Activated naive CD4-positive, alpha-beta T cell treated with anti-CD3 and anti-CD28 coated beads for 36 hours (primary cell): ENCODE measurements at regions of chr17 and their contacts with region 1.

Region 1: DNA sequence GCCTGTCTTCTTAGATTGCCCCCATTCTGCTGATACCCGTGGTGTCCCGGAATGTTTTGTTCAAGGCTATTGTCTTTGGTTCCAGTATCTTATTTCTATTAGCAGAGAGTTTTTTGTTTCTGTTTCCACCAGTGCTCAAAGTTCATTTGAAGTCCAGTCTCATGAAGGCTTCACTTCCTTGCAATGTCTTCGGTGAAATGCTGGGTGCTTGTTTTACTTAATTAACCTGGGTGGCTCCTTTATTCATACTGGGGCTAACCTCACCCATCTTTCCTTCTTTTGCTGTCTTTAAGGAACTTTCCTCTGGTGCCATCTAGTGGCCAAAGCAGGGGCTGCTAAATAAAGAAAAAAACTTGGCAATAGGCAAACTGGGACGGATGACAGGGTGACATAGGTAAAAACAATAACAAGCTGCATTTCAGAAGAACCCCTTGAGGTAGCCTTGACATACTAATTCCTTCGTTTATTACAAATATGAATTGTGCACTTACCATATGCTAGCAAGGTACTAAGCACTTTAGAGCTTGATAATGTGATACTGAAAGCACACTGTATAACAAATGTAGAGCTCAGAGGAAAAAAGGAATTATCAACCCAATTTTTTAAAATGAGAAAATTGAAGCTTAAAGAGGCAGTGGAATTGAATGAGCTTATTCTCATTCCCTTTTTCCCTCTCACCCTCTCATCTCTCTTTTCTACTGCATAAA is 2.8 kb upstream of the SMIM36 start:
- DNase-seq: peak; percentile 85
- H3K4me3 Mint-ChIP-seq: no peak overlapping the region
- H3K27ac Mint-ChIP-seq: no peak overlapping the region
- H3K4me1 Mint-ChIP-seq: no peaks in the 10 kb centered on the region
- H3K27me3 Mint-ChIP-seq: no peaks in the 10 kb centered on the region

Region 2: DNA sequence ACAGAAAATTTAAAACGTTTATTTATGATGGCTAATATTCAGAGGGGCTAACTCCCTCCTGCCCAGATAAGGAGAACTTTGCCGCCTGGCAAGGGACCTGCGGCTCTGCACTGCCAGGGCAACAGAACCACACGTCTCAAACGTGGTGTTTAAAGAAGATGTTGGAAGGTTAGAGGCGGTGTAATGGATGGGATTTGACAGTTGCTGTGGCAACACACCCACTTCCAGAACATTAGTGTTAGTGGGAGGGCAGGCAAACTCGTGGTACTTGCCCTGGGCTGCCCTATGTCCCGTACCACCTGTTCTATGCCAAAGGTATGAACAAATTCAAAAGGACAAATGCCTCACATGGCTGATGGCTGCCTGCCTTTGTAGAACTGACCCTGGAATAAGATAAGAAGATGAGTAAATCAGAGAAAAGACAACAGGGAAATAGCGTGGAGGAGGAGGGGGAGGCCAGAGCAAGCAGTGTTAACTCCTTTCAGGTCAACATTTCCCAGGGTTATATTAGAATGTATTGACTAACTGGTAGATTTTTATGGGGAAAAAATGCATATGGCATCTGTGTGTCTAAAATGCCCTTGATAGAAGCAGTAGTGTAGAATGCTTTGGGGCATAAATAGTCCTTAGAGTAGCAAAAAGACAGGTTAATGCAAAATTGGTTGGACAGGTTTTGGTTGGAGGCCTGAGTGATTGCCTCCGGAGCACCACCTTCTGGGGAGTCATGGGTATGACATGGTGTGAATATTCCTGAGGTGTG is 218.4 kb before region 1 on chr17:
- CTCF ChIA-PET with region 1: no interaction called
- intact Hi-C with region 1: loop called (anchors 1 kb)
- DNase-seq: peak; percentile 72
- H3K4me3 Mint-ChIP-seq: no peak overlapping the region
- H3K27ac Mint-ChIP-seq: no peak overlapping the region
- H3K4me1 Mint-ChIP-seq: no peaks in the 10 kb centered on the region
- H3K27me3 Mint-ChIP-seq: peaks cover 6% of the 10 kb centered on the region

Region 3: DNA sequence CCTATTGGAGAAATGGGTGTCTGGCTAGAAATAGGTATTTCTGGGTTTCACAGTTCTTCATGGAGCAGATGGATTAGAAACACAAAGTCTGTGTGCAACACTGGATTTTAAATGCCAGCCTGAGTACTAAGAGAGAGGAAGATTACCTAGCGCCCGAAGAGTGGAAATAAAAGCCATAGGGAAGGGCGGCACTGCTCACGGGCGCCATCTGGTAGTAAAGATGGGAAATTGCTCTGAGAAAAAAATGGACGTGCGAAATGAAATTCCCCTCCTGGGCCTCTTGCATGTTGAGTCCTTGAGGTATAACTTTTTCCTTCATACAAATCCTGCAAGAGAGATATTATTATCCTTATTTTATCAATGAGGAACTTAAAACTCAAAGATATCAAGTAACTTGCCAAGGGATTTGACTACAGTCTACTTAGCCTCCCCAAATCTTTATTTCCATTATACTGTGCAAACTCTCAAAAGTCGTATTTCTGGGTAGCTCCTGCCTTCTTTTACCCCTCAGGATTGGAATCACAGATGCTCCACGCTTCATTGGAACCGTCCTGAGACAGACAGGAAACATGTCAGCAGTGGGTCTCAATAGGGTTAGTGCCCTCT is 165.2 kb before region 1 on chr17:
- CTCF ChIA-PET with region 1: interaction called, 29 read pairs
- intact Hi-C with region 1: loop called (anchors 2 kb)
- DNase-seq: peak; percentile 54
- H3K4me3 Mint-ChIP-seq: no peak overlapping the region
- H3K27ac Mint-ChIP-seq: no peak overlapping the region
- H3K4me1 Mint-ChIP-seq: peaks cover 4% of the 10 kb centered on the region
- H3K27me3 Mint-ChIP-seq: peaks cover 2% of the 10 kb centered on the region

Region 4: DNA sequence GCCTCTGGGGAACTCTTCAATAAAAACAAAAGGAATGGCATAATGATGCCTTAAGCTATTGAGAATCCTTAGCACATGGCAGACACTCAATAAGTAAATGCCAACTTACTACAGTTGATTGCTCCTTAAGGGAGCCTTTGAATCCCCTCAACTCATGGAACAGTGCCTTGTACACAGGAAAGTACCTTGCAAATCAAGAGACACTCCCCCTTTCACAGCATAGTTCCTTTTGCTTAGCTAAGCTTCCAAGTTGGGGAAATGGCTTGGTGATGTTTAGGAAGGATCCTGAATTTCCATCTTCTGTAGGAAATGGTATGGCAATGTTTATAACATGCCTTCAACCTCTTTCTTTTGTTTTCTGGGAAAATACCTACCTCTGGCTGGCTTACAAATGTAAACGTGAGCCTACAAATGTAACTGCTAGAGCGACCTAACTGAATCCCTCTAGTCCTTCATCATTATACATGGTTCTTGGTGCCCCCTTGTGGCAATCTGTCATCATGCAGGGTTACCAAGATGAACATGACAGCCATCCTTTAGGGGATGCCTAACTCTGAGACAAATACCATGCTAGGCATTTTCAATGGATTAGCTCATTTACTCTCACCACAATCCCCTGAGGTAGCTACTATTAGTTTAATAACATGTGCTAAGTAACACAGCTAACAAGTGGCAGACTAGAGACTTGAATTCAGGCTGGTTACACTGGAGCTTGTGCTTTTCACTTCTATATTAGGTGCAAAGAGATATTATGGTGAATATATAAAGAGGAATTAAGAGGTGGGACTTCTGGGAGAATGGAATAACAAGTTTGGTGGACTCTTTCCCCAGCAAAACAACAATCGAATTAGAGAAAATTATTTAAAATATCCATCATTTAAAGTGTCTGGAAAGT is 157.4 kb before region 1 on chr17:
- CTCF ChIA-PET with region 1: interaction called, 29 read pairs
- intact Hi-C with region 1: loop called (anchors 1 kb)
- DNase-seq: peak; percentile 88
- H3K4me3 Mint-ChIP-seq: no peak overlapping the region
- H3K27ac Mint-ChIP-seq: no peak overlapping the region
- H3K4me1 Mint-ChIP-seq: no peaks in the 10 kb centered on the region
- H3K27me3 Mint-ChIP-seq: peaks cover 9% of the 10 kb centered on the region

Region 5: DNA sequence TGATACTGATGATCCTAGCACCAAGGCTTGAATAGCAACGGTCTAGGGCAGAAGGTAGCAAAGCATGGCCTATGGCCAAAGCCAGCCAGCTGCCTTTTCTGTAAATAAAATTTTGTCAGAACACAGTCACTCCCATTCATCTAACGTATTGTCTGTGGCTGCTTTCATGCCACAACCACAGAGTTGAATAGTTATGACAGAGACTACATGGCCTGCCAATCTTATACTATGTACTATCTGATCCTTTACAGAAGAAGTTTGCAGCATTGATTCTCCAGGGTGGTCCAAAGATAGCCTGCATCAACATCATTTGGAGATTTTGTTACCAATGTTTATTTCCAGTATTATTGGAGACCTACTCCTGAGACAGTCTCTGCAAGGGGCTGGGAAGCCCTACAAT is 72.5 kb before region 1 on chr17:
- CTCF ChIA-PET with region 1: no interaction called
- intact Hi-C with region 1: no loop called
- DNase-seq: no peak
- H3K4me3 Mint-ChIP-seq: no peak overlapping the region
- H3K27ac Mint-ChIP-seq: no peak overlapping the region
- H3K4me1 Mint-ChIP-seq: peaks cover 9% of the 10 kb centered on the region
- H3K27me3 Mint-ChIP-seq: peaks cover 2% of the 10 kb centered on the region

Region 6: GRCh38 chr17:55487695-55488429 is 26.2 kb before region 1 on chr17:
- CTCF ChIA-PET with region 1: interaction called, 3 read pairs
- intact Hi-C with region 1: loop called (anchors 1 kb)
- DNase-seq: no peak
- H3K4me3 Mint-ChIP-seq: no peak overlapping the region
- H3K27ac Mint-ChIP-seq: no peak overlapping the region
- H3K4me1 Mint-ChIP-seq: no peaks in the 10 kb centered on the region
- H3K27me3 Mint-ChIP-seq: no peaks in the 10 kb centered on the region

Region 7: GRCh38 chr17:55735731-55736405 is 221.8 kb after region 1 on chr17:
- CTCF ChIA-PET with region 1: no interaction called
- intact Hi-C with region 1: no loop called
- DNase-seq: peak; percentile 64
- H3K4me3 Mint-ChIP-seq: no peak overlapping the region
- H3K27ac Mint-ChIP-seq: no peak overlapping the region
- H3K4me1 Mint-ChIP-seq: peaks cover 30% of the 10 kb centered on the region
- H3K27me3 Mint-ChIP-seq: peaks cover 27% of the 10 kb centered on the region